ENCODE measurements at regions of chr7 and their contacts with region 1.

Region 1: DNA sequence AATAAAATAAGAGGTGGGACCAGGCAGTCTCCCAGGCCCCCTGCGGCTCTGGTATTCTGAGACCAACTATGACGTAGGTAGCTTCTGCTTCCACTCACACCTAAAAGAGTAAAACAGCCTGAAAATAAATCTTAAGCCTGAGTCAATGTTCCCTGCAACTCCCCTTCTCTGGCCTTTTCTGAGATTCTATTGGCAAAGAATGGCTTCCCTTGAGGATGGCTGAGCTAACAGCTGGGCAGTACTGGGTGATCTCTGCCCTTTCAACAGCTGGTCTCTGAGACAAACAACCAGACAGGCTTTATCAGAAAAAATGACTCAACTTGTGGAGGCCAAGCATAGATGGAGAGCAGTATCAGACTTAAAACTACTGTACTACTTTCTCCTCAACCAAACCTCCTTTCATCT is 58.7 kb downstream of the CREB3L2 start:
- DNase-seq: peak in 2 of 3 donors; percentile 64 to 75
- ATAC-seq: peak; percentile 90 to 91
- H3K4me3 ChIP-seq: no peak overlapping the region
- H3K27ac ChIP-seq: peak overlapping the region; percentile 63
- H3K4me1 ChIP-seq: peaks cover 13% of the 10 kb centered on the region
- H3K27me3 ChIP-seq: no peaks in the 10 kb centered on the region

Region 2: GRCh38 chr7:137992550-137993394 is 49.6 kb after region 1 on chr7:
- intact Hi-C with region 1: loop called in 2 of 4 experiments (anchors 5 to 10 kb)
- DNase-seq: peak; percentile 64 to 82 (median 65)
- ATAC-seq: peak; percentile 63 to 69
- H3K4me3 ChIP-seq: no peak overlapping the region
- H3K27ac ChIP-seq: peak overlapping the region; percentile 91
- H3K4me1 ChIP-seq: peaks cover 34% of the 10 kb centered on the region
- H3K27me3 ChIP-seq: no peaks in the 10 kb centered on the region